Activated T-helper 2 cell treated with anti-CD3 and anti-CD28 coated beads, Interferon-gamma antibody, Interleukin-2, Interleukin-4, amounts not matched to agents 10 μg/mL and 5 μg/mL and 100 μg/mL, durations not matched to agents 14 hours and 24 hours and 36 hours (primary cell): ENCODE measurements at regions of chr6 and their contacts with region 1.

Region 1: DNA sequence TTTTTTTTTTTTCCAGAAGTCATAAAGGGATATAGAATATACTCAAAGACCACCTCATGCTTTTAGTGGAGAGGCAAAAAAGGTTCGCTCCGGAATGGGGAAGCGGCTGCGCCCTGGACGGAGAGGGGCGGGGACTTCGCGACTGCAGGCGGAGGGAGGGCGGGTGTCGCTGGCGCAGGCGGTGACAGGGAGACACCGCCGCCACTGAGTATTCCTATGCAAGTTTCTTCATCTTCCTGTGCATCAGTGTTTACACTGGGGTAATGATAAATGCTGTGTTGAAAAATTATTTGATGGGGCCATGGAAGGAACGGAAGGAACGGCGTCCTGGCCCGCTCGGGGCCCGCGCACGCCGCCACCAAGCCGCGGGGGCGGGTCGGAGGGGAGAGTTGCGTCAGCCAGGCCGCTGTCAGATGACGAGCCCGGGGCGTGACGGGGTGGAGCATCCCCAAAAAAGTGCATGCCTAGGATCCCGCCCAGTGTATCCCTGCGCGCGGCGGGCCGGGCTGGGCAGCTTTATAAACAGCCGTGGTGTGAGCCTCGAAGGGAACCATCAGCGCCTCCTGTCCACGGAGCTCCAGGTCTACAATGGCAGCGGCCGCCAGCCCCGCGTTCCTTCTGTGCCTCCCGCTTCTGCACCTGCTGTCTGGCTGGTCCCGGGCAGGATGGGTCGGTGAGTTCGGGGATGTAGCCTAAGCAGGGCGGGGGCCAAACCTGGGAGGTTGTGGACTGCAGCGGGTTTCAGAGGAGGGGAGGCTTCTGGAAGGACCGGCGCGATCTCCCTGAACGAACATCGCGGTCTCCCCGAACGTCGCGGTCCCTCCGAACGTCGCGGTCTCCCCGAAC is at the start of gene ULBP1:
- DNase-seq: peak; percentile 78
- H3K4me3 Mint-ChIP-seq: peak within 1 kb of the TSS; percentile 85
- H3K27ac Mint-ChIP-seq: peak within 1 kb of the TSS; percentile 81
- H3K4me1 Mint-ChIP-seq: peaks cover 20% of the 10 kb centered on the region
- H3K27me3 Mint-ChIP-seq: peaks cover 83% of the 10 kb centered on the region
- total RNA-seq, gene ULBP1: 0.41 and 0.48 TPM in 2 replicates

Region 2: GRCh38 chr6:149941583-149942431 is 21.9 kb before region 1 on chr6 and contains the start of gene ULBP2:
- intact Hi-C with region 1: loop called (anchors 1 kb)
- DNase-seq: peak; percentile 78
- H3K4me3 Mint-ChIP-seq: peak within 1 kb of the TSS; percentile 91
- H3K27ac Mint-ChIP-seq: peak within 1 kb of the TSS; percentile 55
- H3K4me1 Mint-ChIP-seq: peaks cover 21% of the 10 kb centered on the region
- H3K27me3 Mint-ChIP-seq: peaks cover 69% of the 10 kb centered on the region
- total RNA-seq, gene ULBP2: 0.14 and 0.18 TPM in 2 replicates

Region 3: GRCh38 chr6:149990618-149991471 is 27.2 kb after region 1 on chr6:
- intact Hi-C with region 1: loop called (anchors 2 kb)
- DNase-seq: no peak
- H3K4me3 Mint-ChIP-seq: peak overlapping the region; percentile 79
- H3K27ac Mint-ChIP-seq: no peak overlapping the region
- H3K4me1 Mint-ChIP-seq: peaks cover 29% of the 10 kb centered on the region
- H3K27me3 Mint-ChIP-seq: peaks cover 91% of the 10 kb centered on the region

Region 4: DNA sequence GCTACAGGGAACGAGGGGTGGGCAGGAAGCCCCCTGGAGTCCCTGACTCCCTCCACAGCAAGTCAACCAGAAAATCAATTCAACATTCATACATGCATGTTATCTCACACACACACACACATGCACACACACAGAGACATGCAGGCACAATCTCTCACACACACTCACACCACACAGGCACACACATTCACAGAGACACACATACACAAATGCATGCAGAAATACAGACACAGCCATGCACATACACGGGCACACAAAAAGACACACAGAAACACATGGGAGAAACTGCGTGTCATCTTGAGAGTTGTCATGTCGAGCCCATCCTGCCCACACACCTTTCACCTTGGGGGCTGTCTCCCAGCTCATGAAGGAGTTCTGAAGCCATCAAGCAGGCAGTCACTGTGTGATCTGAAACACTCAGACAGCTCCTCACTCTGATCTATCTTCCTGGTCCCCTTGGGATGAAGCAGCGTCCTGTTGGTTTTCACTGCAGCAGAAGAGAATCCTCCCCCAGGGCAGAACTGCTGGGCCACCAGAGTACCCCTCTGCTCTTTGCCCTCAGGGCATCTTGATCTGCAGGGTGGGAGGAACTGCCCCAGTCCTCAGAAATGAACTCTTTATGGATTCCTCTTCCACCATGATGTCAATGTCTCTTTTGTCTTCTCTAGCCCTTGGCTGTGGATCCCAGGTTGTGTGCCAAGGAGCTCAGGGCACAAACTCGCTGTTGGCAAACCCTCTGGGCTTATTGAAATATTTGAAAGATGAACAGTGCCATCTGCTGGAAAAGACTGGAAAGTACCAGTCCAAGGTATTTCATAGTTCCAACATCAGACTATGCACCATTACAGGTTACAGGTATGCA is 52.9 kb after region 1 on chr6:
- intact Hi-C with region 1: loop called (anchors 2 kb)
- DNase-seq: peak; percentile 33
- H3K4me3 Mint-ChIP-seq: no peak overlapping the region
- H3K27ac Mint-ChIP-seq: no peak overlapping the region
- H3K4me1 Mint-ChIP-seq: peaks cover 17% of the 10 kb centered on the region
- H3K27me3 Mint-ChIP-seq: peaks cover 75% of the 10 kb centered on the region

Region 5: GRCh38 chr6:150142670-150143515 is 179.2 kb after region 1 on chr6 and contains the start of gene PPP1R14C:
- intact Hi-C with region 1: loop called (anchors 10 kb)
- DNase-seq: no peak
- H3K4me3 Mint-ChIP-seq: peak within 1 kb of the TSS; percentile 62
- H3K27ac Mint-ChIP-seq: no peak within 1 kb of the TSS
- H3K4me1 Mint-ChIP-seq: peaks cover 11% of the 10 kb centered on the region
- H3K27me3 Mint-ChIP-seq: peaks cover 72% of the 10 kb centered on the region
- total RNA-seq, gene PPP1R14C: 0.11 and 0.23 TPM in 2 replicates